ENCODE measurements at regions of chr12 and their contacts with region 1.

Region 1: DNA sequence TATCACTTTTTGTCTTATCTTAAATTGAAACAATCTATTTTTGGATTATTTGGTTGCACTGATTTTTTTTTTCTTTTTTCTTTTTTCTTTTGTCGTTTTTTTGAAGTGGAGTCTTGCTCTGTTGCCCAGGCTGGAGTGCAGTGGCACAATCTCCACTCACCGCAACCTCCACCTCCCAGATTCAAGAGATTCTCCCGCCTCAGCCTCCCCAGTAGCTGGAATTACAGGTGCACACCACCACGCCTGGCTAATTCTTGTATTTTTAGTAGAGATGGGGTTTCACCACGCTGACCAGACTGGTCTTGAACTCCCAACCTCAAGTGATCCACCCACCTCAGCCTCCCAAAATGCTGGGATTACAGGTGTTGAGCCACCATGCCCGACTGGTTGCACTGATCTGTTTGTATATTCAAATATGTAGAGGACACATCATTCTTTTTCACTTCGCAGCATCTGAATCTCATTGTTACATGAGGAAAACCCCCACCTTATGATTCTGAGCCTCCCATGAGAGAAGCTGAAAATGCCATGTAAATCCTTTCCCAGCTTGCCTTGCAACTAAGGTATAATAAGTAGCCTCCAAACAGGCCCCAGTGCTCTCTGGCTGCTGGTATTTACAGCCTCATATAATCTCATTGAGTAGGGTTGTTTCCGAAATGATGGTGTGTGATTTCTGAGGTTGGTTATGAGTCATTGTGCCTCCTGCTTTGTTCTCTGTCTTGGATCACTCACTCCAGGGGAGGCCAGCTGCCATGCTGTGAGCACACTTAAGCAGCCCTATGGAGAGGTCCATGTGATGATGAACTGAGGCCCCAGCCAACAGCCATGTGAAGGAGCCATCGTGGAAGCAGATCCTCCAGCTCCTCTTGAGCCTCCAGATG is 5.2 kb upstream of the HSP90B1 start:
- DNase-seq: peak; percentile 80
- H3K4me3 Mint-ChIP-seq: peak overlapping the region; percentile 78
- H3K27ac Mint-ChIP-seq: peak overlapping the region; percentile 94
- H3K4me1 Mint-ChIP-seq: peaks cover 39% of the 10 kb centered on the region
- H3K27me3 Mint-ChIP-seq: no peaks in the 10 kb centered on the region

Region 2: GRCh38 chr12:103877934-103878510 is 47.0 kb before region 1 on chr12:
- CTCF ChIA-PET with region 1: interaction called, 3 read pairs
- POLR2A ChIA-PET with region 1: interaction called, 6 read pairs
- intact Hi-C with region 1: loop called (anchors 1 kb)
- DNase-seq: peak; percentile 70
- H3K4me3 Mint-ChIP-seq: no peak overlapping the region
- H3K27ac Mint-ChIP-seq: no peak overlapping the region
- H3K4me1 Mint-ChIP-seq: peaks cover 18% of the 10 kb centered on the region
- H3K27me3 Mint-ChIP-seq: no peaks in the 10 kb centered on the region

Region 3: GRCh38 chr12:103908866-103909265 is 16.1 kb before region 1 on chr12:
- CTCF ChIA-PET with region 1: interaction called, 3 read pairs
- POLR2A ChIA-PET with region 1: interaction called, 21 read pairs
- intact Hi-C with region 1: loop called (anchors 1 kb)
- DNase-seq: no peak
- H3K4me3 Mint-ChIP-seq: no peak overlapping the region
- H3K27ac Mint-ChIP-seq: no peak overlapping the region
- H3K4me1 Mint-ChIP-seq: peaks cover 27% of the 10 kb centered on the region
- H3K27me3 Mint-ChIP-seq: no peaks in the 10 kb centered on the region

Region 4: GRCh38 chr12:104064031-104064822 is 139.2 kb after region 1 on chr12 and contains the start of gene HCFC2:
- CTCF ChIA-PET with region 1: no interaction called
- POLR2A ChIA-PET with region 1: interaction called, 6 read pairs
- intact Hi-C with region 1: loop called (anchors 1 kb)
- DNase-seq: peak; percentile 93
- H3K4me3 Mint-ChIP-seq: peak within 1 kb of the TSS; percentile 97
- H3K27ac Mint-ChIP-seq: peak within 1 kb of the TSS; percentile 81
- H3K4me1 Mint-ChIP-seq: peaks cover 21% of the 10 kb centered on the region
- H3K27me3 Mint-ChIP-seq: peaks cover 12% of the 10 kb centered on the region
- total RNA-seq, gene HCFC2: 8.9 to 10.8 TPM